ENCODE measurements at regions of chr11 and their contacts with region 1.

Region 1: GRCh38 chr11:85854557-85855340 is 434 bp upstream of the CCDC83 start:
- DNase-seq: peak; percentile 94
- H3K4me3 ChIP-seq: peak overlapping the region; percentile 40 to 82 (median 49)
- H3K27ac ChIP-seq: peak overlapping the region; percentile 92
- H3K4me1 ChIP-seq: peaks cover 4% of the 10 kb centered on the region
- H3K27me3 ChIP-seq: no peaks in the 10 kb centered on the region
- CTCF ChIP-seq: peak; percentile 58 to 79
- POLR2A ChIP-seq: peak; percentile 65

Region 2: DNA sequence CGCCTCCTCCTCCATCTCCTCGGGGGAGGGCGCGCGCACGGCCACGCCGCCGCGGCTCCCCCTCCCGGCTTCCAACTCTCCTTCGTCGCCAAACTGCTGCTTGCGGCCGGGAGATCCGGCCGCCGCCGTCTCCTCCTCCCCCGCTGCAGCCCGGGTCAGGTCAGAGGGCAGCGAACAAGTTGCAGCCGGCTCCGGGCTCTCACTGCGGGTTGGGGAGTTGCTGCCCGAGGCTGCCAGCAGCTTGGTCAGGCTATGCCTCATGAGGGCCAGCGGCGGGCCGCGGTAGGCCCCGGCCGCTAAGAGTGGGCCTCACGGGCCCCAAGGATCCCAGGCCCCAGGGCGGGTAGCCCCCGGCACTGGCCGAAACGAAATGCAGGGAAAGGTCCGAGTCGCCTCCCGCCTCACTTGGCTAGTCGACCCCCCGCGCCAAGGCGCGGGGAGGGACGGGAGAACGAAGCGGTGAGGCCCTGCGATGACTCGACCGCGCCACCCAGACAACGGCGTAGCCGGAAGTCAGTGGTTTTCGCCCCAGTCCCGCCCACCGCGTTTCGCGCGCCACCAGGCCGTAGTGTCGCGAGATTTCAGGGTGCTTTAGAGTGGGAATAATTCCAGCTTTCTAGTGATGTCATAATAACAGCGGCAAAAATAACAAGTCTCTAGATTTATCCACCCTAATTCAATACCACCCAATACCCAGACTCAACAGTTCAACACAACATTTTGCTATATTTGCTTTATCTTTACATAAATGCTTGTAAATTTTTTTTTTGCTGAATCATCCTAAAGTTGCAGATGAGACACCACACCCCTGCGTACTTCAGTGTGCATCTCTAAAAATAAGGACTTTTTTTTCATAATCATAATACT is 189.9 kb before region 1 on chr11 and contains the start of gene CREBZF:
- CTCF ChIA-PET with region 1: no interaction called
- POLR2A ChIA-PET with region 1: no interaction called
- dilution Hi-C with region 1: no loop called
- intact Hi-C with region 1: loop called (anchors 1 kb)
- DNase-seq: peak; percentile 94
- H3K4me3 ChIP-seq: peak within 1 kb of the TSS; percentile 40 to 92 (median 66)
- H3K27ac ChIP-seq: peak within 1 kb of the TSS; percentile 91
- H3K4me1 ChIP-seq: peaks cover 27% of the 10 kb centered on the region
- H3K27me3 ChIP-seq: no peaks in the 10 kb centered on the region
- CTCF ChIP-seq: no peak
- POLR2A ChIP-seq: peak; percentile 90
- total RNA-seq, gene CREBZF: 33.7 and 35.5 TPM in 2 replicates

Region 3: GRCh38 chr11:85748411-85748891 is 106.3 kb before region 1 on chr11:
- CTCF ChIA-PET with region 1: no interaction called
- POLR2A ChIA-PET with region 1: no interaction called
- dilution Hi-C with region 1: no loop called
- intact Hi-C with region 1: no loop called
- DNase-seq: no peak
- H3K4me3 ChIP-seq: no peak overlapping the region
- H3K27ac ChIP-seq: no peak overlapping the region
- H3K4me1 ChIP-seq: peaks cover 13% of the 10 kb centered on the region
- H3K27me3 ChIP-seq: peaks cover 3 to 4% of the 10 kb centered on the region in 2 experiments
- CTCF ChIP-seq: no peak
- POLR2A ChIP-seq: no peak

Region 4: GRCh38 chr11:85810871-85811611 is 43.7 kb before region 1 on chr11 and contains the start of gene SYTL2:
- CTCF ChIA-PET with region 1: interaction called, 10 read pairs
- POLR2A ChIA-PET with region 1: no interaction called
- dilution Hi-C with region 1: no loop called
- intact Hi-C with region 1: no loop called
- DNase-seq: peak; percentile 57
- H3K4me3 ChIP-seq: peak within 1 kb of the TSS; percentile 19 to 41 (median 26)
- H3K27ac ChIP-seq: no peak within 1 kb of the TSS
- H3K4me1 ChIP-seq: peaks cover 8% of the 10 kb centered on the region
- H3K27me3 ChIP-seq: peaks cover 8 to 18% of the 10 kb centered on the region in 2 experiments
- CTCF ChIP-seq: peak in 1 of 2 donors; percentile 10
- POLR2A ChIP-seq: no peak
- total RNA-seq, gene SYTL2: 2.4 and 3.5 TPM in 2 replicates

Region 5: DNA sequence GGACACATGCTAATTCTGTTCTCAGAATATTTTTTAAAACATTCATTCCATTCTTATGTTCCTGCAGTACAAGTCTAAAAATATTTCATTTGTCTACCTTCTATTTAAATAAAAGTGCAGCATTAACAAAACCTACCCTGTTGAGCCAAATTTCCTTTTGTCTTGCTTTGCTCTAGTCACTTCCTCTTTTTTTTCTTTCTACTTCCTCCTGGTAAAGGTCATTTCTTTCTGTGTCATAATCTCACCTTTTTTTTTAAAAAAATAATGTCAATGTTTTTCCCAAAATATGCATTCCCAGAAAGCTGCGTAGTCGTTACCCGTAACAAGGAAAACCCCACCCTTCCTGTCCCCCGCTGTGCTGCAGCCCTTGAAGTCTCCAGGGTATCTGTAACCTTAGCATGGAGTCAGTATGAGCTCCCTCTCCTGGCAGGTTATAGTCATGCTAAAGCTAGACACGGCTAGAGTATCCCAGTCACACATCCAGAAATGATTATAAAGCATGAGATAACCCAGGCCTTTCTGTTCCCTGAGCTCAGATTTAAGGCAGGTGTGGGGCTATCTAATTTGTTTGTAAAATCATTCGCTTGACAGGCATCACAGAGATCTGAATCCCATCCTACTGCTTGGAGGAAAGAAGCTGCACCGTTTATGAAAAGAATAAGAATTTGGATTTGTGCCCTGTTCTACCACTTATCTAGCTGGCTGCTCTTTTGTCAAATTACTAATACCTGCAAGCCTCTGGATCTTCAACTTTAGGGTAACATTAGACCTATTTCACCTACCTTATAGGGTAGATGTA is 338.7 kb after region 1 on chr11:
- CTCF ChIA-PET with region 1: interaction called, 12 read pairs
- POLR2A ChIA-PET with region 1: no interaction called
- dilution Hi-C with region 1: no loop called
- intact Hi-C with region 1: no loop called
- DNase-seq: peak; percentile 84
- H3K4me3 ChIP-seq: peak overlapping the region in 1 of 3 experiments; percentile 4
- H3K27ac ChIP-seq: peak overlapping the region; percentile 27
- H3K4me1 ChIP-seq: peaks cover 10% of the 10 kb centered on the region
- H3K27me3 ChIP-seq: no peaks in the 10 kb centered on the region
- CTCF ChIP-seq: peak; percentile 71 to 75
- POLR2A ChIP-seq: no peak

Region 6: GRCh38 chr11:86360775-86361395 is 506.1 kb after region 1 on chr11:
- CTCF ChIA-PET with region 1: interaction called, 13 read pairs
- POLR2A ChIA-PET with region 1: no interaction called
- dilution Hi-C with region 1: no loop called
- intact Hi-C with region 1: no loop called
- DNase-seq: peak; percentile 61
- H3K4me3 ChIP-seq: no peak overlapping the region
- H3K27ac ChIP-seq: peak overlapping the region; percentile 34
- H3K4me1 ChIP-seq: peaks cover 7% of the 10 kb centered on the region
- H3K27me3 ChIP-seq: no peaks in the 10 kb centered on the region
- CTCF ChIP-seq: peak; percentile 19 to 33
- POLR2A ChIP-seq: no peak